H1 (cell line): ENCODE measurements at regions of chr1 and their contacts with region 1.

Region 1: DNA sequence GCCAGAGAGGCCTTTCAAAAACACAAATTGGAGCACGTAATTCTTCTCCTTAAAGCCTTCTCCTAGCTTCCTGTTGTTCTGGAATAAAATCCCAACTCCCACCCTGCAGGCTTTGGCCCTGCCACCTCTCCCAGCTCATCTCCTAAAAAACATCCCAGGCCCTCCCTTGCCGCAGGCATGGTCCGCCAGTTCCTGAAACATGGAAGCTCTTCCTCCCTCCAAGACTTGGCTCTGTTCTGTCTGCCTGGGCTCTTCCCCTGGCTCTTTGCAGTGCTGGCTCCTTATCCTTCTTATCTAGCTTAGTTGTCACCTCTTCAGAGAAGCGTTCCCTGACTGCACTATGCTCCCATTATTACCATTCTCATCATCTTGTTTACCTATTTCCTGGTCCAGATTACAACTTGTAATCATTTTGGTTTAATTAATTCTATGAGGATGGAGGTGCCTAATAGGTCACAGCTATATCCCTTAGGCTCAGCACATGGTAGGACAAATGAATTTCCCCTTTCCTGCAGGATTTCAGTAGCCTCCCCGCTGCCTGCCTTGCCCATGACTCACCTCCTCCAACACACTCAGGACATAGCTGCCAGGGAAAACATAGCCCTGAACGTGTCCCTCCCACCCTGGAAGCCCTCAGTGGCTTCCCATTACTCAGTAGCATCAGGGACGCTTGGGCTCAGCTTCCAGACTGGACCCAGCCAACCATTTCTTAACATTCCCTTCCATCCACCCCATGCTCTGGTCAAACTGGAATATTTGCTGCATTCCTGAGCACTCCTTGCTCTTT is 15.7 kb upstream of the IGSF21 start:
- DNase-seq: no peak
- H3K4me3 ChIP-seq: peak overlapping the region in 1 of 4 experiments; percentile 5; a peak in 2 of 8 replicates
- H3K27ac ChIP-seq: no peak overlapping the region
- H3K4me1 ChIP-seq: peaks cover 6 to 23% (median 15%) of the 10 kb centered on the region in 4 experiments
- H3K27me3 ChIP-seq: peaks cover 0 to 5% (median 0%) of the 10 kb centered on the region in 4 experiments; a peak in 1 of 7 replicates
- CTCF ChIP-seq: no peak
- EP300 ChIP-seq: no peak
- POLR2A ChIP-seq: no peak
- RAD21 ChIP-seq: no peak

Region 2: GRCh38 chr1:18041102-18041501 is 50.8 kb before region 1 on chr1:
- CTCF ChIA-PET with region 1: interaction called, 10 read pairs
- POLR2A ChIA-PET with region 1: no interaction called
- DNase-seq: no peak
- H3K4me3 ChIP-seq: no peak overlapping the region
- H3K27ac ChIP-seq: no peak overlapping the region
- H3K4me1 ChIP-seq: no peaks in the 10 kb centered on the region
- H3K27me3 ChIP-seq: peaks cover 0 to 3% (median 0%) of the 10 kb centered on the region in 4 experiments; a peak in 3 of 7 replicates
- CTCF ChIP-seq: no peak
- EP300 ChIP-seq: no peak
- POLR2A ChIP-seq: no peak
- RAD21 ChIP-seq: no peak